Cardiac septum (tissue), 1 donor: ENCODE measurements at regions of chr17 and their contacts with region 1.

Region 1: GRCh38 chr17:39980351-39981206 is at the start of gene PSMD3:
- DNase-seq: peak; percentile 98
- total RNA-seq, gene PSMD3: 85.2 TPM

Region 2: GRCh38 chr17:39872751-39873150 is 107.8 kb before region 1 on chr17:
- intact Hi-C with region 1: loop called (anchors 5 kb)
- DNase-seq: no peak

Region 3: GRCh38 chr17:39927101-39927928 is 53.3 kb before region 1 on chr17 and contains the starts of genes LRRC3C and ORMDL3:
- intact Hi-C with region 1: loop called (anchors 1 kb)
- DNase-seq: peak; percentile 98
- total RNA-seq, gene LRRC3C: not detected
- total RNA-seq, gene ORMDL3: 104 TPM

Region 4: GRCh38 chr17:39952680-39953470 is 27.7 kb before region 1 on chr17:
- intact Hi-C with region 1: loop called (anchors 2 kb)
- DNase-seq: peak; percentile 100

Region 5: DNA sequence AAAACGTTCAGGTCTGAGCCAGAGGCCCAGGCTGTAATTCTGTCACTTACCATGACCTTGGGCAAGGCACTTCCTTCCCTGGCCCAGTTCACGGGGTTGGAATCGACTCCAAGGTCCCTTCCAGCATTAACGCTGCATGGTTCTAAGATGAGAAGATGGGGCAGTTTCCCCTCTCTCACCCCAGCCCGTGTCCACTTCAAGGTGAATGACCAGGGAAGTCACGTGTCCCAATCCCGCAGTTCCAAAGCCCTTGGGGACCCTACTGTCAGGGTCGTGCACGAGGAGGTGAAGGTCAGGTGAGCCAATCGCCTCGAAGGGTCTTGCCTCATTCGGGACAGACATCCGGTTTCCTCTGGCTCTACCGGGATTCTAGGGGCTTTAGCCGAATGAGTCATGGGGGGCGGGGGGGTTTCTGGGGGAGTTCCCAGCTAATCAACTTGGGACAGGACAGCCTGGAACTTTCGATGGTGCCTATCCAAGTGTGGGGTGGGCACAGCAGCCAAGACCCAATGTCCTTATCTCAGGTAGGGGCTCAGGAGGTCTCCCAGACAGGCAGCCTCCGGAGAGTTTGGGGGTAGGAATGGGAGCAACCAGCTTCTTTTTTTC is 33.9 kb after region 1 on chr17:
- intact Hi-C with region 1: no loop called
- DNase-seq: no peak

Region 6: GRCh38 chr17:40075201-40075941 is 94.8 kb after region 1 on chr17:
- intact Hi-C with region 1: no loop called
- DNase-seq: no peak